ENCODE measurements at regions of chr11 and their contacts with region 1.

Region 1: DNA sequence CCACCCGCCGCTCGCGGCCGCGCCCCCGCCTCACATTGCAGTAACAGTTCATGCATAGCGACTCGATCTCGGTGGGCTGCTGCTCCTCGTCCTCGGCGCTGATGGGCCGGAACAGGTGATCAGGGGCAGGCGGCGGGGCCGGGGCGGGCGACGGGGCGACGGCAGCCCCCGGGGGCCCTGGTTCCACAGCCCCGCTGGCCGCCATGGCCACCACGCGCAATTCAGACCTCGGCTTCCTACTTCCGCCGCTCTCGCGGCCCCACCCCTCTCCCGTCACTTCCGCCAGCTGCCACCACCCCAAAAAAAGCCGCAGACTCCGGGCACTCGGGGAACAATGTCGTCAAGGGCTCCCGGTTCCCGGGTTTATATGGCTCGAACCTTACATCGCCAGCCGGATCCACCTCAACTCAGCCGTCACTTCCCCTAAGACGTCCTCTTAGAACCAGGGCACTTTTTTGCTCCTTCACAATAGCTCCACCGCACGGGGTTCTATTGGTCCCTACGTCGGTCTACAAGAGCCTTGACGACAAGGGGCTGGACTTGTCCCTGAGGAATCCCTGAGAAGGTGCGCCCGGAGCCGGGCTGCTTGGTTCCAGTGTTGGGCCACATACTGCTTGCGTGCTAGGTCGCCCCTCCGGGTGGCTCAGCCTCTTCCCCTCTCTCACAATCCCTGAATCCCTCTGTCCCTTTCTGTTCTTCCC is at the start of gene ZPR1:
- H3K4me3 ChIP-seq: peak within 1 kb of the TSS; percentile 81
- H3K27ac ChIP-seq: no peak within 1 kb of the TSS; the same call in 1 of the 2 replicates
- H3K4me1 ChIP-seq: no peaks in the 10 kb centered on the region
- CTCF ChIP-seq: no peak

Region 2: DNA sequence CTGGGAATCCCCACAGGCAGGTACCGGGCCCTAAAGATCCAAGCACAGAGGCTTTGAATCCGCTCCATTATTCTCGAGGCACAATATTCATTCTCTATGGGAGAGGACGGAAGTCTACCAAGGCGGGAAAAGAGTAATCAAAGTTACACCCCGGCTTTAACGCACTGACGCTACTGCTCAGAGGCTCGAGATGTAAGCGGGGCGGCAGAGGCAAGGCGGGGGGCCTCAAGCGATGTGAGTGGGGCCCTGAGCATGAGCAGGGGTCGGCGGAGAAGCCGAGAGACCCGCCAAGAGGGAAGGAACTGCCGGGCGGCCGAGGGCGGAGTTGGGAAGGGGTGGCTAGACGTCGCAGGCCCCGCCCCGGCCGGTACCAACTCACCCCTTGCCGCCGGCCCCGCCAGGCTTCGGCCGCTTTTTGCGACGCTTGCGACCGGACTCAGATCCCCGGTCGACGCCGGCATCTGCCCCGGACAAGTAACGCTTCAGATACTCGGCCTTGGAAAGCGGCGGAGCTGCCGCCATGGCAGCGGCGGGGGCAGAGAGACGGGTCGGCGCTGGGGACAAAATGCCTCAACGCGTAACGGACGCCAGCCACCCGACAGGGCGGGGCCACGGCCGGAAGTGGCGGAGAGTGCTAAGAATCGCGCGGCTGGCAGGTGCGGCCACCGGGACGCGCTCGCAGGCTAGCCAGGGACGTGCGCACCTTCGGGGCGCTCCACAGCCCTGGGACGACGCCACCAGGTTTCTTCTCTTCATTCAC is 15.3 kb before region 1 on chr11 and contains the start of gene BUD13:
- CTCF ChIA-PET with region 1: interaction called, 7 read pairs
- POLR2A ChIA-PET with region 1: interaction called, 14 read pairs
- H3K4me3 ChIP-seq: peak within 1 kb of the TSS; percentile 96
- H3K27ac ChIP-seq: peak within 1 kb of the TSS; percentile 83
- H3K4me1 ChIP-seq: peaks cover 4% of the 10 kb centered on the region; the same call in 1 of the 2 replicates
- CTCF ChIP-seq: no peak

Region 3: DNA sequence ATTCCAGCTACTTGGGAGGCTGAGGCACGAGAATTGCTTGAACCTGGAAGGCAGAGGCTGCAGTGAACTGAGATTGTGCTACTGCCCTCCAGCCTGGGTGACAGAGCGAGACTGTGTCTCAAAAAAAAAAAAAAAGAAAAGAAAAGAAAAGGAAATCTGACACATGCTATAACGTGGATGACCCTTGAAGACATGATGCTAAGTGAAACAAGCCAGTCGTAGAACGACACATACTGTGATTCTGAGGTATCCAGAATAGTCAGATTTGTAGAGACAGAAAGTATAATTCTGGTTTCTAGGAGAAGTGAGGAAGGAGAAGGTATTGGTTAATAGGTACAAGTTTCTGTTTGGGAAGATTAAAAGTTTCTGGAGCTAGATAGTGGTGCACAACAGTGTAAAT is 10.4 kb after region 1 on chr11:
- CTCF ChIA-PET with region 1: interaction called, 19 read pairs
- POLR2A ChIA-PET with region 1: no interaction called
- H3K4me3 ChIP-seq: no peak overlapping the region
- H3K27ac ChIP-seq: no peak overlapping the region
- H3K4me1 ChIP-seq: no peaks in the 10 kb centered on the region
- CTCF ChIP-seq: no peak

Region 4: DNA sequence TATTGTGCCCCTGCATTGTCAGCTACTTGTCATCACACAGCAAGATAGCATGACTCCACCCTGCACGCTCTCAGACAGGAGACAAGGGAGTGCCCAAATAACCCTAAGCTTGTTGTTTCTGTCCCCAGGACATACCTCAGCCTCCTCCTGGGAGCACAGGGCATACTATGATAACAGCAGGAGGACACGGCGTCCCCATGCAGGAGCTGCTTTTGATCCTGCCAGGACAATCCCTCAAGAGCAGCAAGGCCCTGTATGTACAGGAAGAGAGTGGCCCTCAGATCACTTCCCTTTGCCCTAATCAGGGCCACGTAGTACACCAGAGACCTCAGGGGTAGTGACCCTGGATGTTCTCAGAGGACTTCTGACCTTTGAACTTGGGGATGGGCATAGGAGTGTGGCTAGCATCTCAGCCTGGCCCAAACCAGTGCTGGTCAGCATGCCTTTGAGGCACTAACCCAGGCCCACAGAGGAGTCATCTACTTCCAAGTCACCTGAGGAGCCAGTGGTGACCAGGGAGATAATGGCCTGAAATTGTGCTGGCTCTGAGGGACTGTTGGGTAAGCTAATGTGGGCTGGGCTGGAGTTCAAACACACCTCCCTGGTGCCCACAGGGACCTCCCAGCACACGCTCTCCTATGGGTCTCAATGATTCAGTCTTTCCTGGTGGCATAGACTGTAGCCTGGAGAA is 26.0 kb after region 1 on chr11:
- CTCF ChIA-PET with region 1: interaction called, 15 read pairs
- POLR2A ChIA-PET with region 1: no interaction called
- H3K4me3 ChIP-seq: no peak overlapping the region
- H3K27ac ChIP-seq: no peak overlapping the region
- H3K4me1 ChIP-seq: no peaks in the 10 kb centered on the region
- CTCF ChIP-seq: no peak

Region 5: DNA sequence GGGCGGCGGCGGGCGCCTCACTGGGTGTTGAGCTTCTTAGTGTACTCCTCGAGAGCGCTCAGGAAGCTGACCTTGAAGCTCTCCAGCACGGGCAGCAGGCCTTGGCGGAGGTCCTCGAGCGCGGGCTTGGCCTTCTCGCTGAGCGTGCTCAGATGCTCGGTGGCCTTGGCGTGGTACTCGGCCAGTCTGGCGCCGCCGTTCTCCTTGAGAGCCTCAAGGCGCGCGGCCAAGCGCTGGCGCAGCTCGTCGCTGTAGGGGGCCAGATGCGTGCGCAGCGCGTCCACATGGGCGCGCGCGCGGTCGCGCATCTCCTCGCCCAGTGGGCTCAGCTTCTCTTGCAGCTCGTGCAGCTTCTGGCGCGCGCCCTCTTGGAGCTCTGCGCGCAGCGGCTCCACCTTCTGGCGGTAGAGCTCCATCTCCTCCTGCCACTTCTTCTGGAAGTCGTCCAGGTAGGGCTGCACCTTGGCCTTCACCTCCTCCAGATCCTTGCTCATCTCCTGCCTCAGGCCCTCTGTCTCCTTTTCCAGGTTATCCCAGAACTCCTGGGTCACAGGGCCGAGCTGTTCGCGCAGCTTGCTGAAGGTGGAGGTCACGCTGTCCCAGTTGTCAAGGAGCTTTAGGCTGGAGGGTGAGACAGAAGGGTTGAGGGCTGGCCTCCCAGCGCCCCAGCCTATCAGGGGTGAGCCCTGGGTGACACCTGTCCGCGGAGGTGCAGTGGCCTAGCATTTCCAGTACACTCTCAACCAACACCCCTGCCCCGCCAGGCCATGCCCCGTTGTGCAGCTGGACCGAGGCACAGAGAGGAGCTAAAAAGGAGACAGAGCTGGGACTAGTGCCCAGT is 48.1 kb after region 1 on chr11:
- CTCF ChIA-PET with region 1: interaction called, 118 read pairs
- POLR2A ChIA-PET with region 1: interaction called, 13 read pairs
- H3K4me3 ChIP-seq: no peak overlapping the region; the same call in 1 of the 2 replicates
- H3K27ac ChIP-seq: no peak overlapping the region; the same call in 1 of the 2 replicates
- H3K4me1 ChIP-seq: no peaks in the 10 kb centered on the region
- CTCF ChIP-seq: peak; percentile 90

Region 6: DNA sequence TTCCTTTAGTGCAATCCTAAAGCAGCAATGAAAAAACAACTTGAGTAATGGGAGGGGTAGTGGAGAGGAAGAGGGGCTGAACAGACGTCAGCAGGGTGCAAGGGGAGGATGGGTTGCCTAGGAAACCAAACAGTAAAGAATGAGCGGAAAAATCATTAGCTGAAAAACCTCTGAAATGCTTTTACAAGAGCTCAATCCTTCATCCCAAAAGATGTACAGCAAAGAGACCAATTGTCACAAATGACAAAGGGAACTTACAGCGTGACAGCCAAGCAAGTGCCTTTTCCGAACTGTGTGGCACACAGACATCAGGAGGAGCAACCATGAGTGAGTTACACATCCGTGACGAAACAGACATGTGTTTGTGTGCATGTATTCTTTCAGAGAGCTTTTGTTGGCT is 205.7 kb after region 1 on chr11:
- CTCF ChIA-PET with region 1: no interaction called
- POLR2A ChIA-PET with region 1: no interaction called
- H3K4me3 ChIP-seq: no peak overlapping the region
- H3K27ac ChIP-seq: no peak overlapping the region
- H3K4me1 ChIP-seq: no peaks in the 10 kb centered on the region; the same call in 1 of the 2 replicates
- CTCF ChIP-seq: no peak

Region 7: DNA sequence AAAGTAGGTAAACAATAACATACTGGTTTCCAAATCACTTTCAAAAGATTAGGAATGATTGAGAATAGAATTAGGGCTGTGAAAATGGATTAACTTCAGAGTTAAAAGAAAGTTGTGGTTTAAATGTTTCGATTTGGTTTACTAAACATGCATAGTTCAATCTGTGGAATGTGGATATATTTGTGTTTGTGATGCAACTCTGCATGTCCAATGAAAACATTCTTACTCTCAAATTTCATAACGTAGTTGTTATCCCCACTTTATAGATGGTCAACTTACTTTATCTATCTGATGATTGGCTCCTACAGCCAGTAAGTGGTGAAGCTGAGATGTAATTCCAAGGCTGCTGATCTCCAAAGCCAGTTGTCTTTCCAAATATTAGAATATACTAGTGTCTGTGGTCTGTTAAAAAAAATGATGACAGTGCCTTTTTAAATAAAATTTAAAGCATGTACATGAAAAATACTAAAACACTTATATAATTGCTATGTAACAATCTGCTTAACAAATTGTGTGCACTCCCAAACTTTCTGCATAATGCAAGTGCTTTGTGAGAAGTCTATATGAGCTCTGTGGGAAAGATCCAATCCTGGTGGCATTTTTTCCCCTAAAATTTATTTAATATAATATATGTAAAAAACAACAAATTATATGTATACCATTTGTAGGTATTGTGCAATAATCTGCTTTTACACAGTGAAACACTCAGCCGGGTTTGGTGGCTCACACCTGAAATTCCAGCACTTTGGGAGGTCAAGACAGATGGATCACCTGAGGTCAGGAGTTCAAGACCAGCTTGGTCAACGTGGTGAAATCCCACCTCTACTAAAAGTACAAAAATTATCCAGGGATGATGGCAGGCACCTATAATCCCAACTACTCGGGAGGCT is 320.0 kb after region 1 on chr11:
- CTCF ChIA-PET with region 1: interaction called, 89 read pairs
- POLR2A ChIA-PET with region 1: no interaction called
- H3K4me3 ChIP-seq: no peak overlapping the region
- H3K27ac ChIP-seq: no peak overlapping the region
- H3K4me1 ChIP-seq: no peaks in the 10 kb centered on the region
- CTCF ChIP-seq: no peak

Region 8: GRCh38 chr11:117226388-117227385 is 438.8 kb after region 1 on chr11:
- CTCF ChIA-PET with region 1: interaction called, 13 read pairs
- POLR2A ChIA-PET with region 1: no interaction called
- H3K4me3 ChIP-seq: no peak overlapping the region
- H3K27ac ChIP-seq: no peak overlapping the region
- H3K4me1 ChIP-seq: peaks cover 3% of the 10 kb centered on the region; the same call in 1 of the 2 replicates
- CTCF ChIP-seq: no peak

Measured in HEK293 (cell line).